IMR-90 (cell line): ENCODE measurements at regions of chr9 and their contacts with region 1.

Region 1: DNA sequence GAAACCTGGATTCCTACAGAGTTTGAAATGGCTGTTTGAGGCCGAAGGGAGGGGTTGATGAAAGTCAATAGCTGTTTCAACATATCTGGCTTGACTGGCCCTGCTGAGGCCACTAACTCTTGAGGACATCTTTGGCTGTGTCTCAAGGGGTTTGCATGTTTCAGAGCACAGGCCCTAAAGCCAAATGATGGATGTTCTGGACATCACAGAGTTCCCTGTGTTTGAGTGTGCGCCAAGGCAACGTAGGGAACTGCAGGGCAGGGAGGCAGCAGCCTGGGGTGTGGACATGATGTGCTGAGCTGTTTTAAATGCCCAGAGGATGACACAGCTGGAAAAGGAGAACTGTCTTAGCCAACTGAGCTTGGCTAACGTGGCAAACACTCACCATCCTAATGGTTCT is 89.6 kb downstream of the RAPGEF1 start:
- DNase-seq: peak; percentile 47
- ATAC-seq: peak; percentile 66
- H3K4me3 ChIP-seq: no peak overlapping the region
- H3K27ac ChIP-seq: no peak overlapping the region
- H3K4me1 ChIP-seq: peaks cover 16% of the 10 kb centered on the region
- H3K27me3 ChIP-seq: no peaks in the 10 kb centered on the region
- CTCF ChIP-seq: no peak
- POLR2A ChIP-seq: no peak
- RAD21 ChIP-seq: no peak

Region 2: GRCh38 chr9:131627648-131628458 is 22.4 kb before region 1 on chr9:
- CTCF ChIA-PET with region 1: no interaction called
- POLR2A ChIA-PET with region 1: no interaction called
- dilution Hi-C with region 1: no loop called
- in situ Hi-C with region 1: no loop called
- intact Hi-C with region 1: loop called (anchors 2 kb)
- DNase-seq: peak; percentile 87
- ATAC-seq: peak; percentile 83
- H3K4me3 ChIP-seq: no peak overlapping the region
- H3K27ac ChIP-seq: peak overlapping the region; percentile 63
- H3K4me1 ChIP-seq: peaks cover 15% of the 10 kb centered on the region
- H3K27me3 ChIP-seq: no peaks in the 10 kb centered on the region
- CTCF ChIP-seq: no peak
- POLR2A ChIP-seq: no peak
- RAD21 ChIP-seq: no peak